Left cardiac atrium (tissue), 4 donors: ENCODE measurements at regions of chr2 and their contacts with region 1.

Region 1: GRCh38 chr2:85602476-85603234 is at the start of gene TMEM150A:
- DNase-seq: peak; percentile 97
- ATAC-seq: peak; percentile 97
- total RNA-seq, gene TMEM150A: 12.7 to 14.9 TPM

Region 2: DNA sequence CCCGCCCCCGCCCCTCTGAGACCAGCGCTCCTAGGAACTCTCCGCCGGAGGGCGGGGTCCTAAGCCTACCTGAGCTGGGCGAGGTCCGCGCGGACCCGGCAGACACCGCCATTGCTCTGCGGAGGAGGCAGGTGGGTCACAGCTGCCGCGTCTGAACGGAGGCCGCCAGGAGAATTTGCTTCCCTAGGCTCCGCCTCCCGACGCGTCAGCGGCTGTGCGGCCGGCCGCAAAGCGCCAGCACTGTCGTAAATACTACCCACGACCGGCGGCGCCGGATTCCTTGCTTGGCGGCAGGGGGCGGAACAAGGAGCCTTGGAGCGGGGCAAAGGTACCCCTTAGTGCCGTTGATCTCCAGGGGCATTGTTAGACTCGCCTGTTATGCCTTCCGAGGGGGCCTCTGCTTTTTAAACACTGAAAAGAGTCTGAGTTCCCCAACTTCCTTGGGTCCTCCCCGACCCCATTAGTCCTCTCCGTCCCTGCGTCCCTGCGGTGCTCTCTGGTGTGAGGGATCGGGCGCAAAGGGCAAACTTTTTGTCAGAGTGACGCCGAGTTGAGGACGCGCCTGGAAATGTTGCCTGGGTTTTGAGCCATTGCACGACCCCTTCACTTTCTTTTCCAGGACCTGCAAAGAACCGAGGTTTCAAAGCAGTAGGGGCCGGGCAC is 41.2 kb before region 1 on chr2 and contains the start of gene GGCX:
- intact Hi-C with region 1: loop called in 1 of 2 experiments (anchors 5 kb)
- DNase-seq: peak; percentile 96
- ATAC-seq: peak; percentile 95 to 96
- total RNA-seq, gene GGCX: 34.0 to 37.3 TPM

Region 3: GRCh38 chr2:85678794-85679672 is 76.4 kb after region 1 on chr2:
- intact Hi-C with region 1: no loop called
- DNase-seq: peak; percentile 94
- ATAC-seq: peak; percentile 93 to 94

Region 4: DNA sequence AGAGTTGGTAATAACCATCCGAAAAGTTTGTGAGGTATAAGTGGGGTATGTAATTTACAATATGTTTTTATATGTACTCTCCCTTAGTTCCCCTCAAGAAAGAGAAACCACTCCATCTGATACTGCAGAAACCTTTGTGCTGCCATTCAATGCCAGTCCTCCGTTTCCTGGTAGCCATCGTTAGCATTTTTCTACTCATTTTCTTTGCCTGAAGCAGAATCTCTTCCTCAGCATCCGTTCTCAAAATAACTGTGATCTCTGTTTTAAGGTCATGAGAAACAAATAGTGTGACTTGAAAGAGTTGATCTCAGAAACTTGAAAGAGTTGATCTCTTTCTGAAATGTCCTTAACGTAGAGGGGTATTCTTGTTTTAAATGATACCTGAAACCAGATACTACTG is 504.4 kb after region 1 on chr2:
- intact Hi-C with region 1: no loop called
- DNase-seq: no peak
- ATAC-seq: no peak